ENCODE measurements at regions of chr5 and their contacts with region 1.

Region 1: DNA sequence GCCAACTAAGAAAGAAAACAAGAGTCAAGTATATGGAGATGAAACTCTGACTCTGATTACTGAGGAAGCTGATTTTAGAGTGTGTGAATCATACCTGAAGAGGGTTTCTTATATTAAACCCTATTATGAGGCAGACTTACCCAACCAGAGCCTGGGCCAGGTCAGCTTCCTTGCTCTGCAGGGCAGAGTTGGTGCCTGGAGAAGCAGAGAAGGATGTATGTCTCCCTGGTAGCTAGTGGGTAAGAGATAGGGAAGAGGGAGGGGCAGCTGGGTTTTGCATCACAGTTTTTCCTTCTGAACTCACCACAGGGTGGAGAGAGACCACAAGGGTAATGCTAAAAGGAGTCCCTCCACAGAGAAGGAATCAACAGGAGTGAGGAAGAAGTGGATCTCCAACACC is 104.1 kb downstream of the CMYA5 start:
- DNase-seq: no peak
- ATAC-seq: no peak

Region 2: DNA sequence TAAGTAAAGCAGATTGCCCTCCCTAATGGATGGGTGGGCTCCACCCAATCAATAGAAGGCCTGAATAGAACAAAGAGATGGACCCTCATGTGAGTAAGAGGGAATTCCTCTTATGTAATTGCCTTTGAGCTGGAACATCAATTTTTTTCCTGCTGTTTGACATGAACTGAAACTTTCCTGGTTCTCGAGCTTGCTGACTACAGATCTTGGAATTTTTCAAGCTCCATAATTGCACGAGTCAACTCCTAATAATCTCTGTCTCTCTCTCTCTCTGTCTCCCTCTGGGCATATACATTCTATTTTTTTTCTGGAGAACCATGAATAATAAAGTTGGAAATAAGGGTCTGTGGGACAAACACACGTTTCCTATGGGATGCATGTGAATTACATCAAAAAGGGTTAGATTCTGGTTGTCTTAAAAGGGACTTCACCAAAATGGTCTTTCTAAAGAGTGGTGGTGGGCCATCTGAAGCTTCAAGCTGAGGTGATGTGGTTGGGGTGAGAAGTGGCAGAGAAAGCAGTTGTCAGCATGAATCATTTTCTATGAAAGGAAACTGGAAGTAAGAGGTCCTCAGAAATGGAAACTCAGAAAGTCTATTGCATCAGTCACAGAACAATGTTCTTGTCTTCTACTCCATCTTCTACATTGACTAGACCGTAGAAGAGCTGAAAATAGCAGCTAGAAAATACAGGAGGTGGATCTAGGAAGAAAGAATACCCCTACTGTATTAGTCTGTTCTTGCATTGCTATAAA is 232.8 kb before region 1 on chr5:
- intact Hi-C with region 1: loop called (anchors 5 kb)
- DNase-seq: no peak
- ATAC-seq: no peak

Region 3: DNA sequence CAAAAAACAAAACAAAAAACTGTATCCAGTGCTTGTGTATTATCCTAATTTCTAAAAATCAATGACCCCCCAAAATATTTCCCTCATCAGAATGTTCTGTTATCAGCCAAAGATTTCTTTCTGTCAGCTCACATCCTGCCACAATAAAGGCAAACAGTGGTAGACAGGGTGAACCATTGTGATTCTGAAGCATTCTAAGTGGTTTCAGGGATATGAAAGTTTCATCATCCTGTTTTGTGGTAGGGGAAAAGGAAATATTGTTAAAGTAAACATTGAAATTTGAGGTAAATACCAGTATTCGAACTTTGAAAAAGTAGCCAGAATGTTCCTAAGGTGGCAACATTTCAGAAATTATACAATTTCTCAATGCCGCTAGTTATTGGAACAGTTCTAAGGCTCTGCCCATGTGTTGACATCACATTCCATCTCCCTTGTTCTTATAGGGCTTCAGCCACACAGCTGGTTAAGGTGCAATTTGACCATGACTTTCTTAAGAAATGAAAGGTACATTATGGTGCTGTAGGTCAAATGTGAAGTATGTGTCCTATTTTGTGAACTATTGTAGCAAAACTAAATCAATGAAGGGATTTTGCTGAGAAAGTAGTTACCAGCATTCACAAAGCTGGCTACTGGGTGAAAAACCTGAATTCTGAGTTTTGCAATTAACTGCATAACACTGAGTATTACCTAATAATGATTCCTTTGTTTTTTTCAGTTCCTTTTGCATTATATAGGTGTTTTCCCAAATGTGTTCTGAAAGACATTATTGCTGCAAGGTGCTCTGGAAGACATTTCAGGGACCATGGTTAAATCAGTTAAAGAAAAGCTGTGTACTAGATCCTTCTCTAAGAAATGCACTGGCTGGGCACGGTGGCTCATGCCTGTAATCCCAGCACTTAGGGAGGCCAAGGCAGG is 1058.9 kb after region 1 on chr5:
- intact Hi-C with region 1: no loop called
- DNase-seq: no peak
- ATAC-seq: no peak

Measured in Right ventricle myocardium inferior (tissue), 1 donor.